ENCODE measurements at regions of chr1 and their contacts with region 1.

Region 1: DNA sequence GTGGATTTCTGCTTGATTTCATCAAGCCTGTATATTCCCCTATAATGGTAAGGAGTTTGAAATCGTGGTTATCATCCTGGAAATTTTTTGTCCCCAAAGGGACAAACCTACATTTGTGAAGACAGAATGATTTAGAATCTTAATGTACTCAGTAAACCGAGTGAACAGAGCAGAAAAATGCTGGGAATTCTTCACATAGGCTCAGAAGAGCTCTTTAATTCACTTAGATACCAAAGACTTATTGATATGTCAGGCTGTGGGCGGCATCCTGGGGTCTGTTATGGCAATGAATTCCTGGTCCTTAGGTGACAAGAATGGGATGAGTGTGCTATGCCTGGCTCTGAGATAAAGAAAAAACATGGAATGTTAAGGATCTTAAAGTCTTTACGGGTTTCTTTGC is 74.9 kb downstream of the ROR1 start:
- DNase-seq: no peak
- H3K4me3 ChIP-seq: no peak overlapping the region
- H3K27ac ChIP-seq: no peak overlapping the region
- H3K4me1 ChIP-seq: no peaks in the 10 kb centered on the region
- H3K27me3 ChIP-seq: no peaks in the 10 kb centered on the region
- CTCF ChIP-seq: no peak
- POLR2A ChIP-seq: no peak

Region 2: DNA sequence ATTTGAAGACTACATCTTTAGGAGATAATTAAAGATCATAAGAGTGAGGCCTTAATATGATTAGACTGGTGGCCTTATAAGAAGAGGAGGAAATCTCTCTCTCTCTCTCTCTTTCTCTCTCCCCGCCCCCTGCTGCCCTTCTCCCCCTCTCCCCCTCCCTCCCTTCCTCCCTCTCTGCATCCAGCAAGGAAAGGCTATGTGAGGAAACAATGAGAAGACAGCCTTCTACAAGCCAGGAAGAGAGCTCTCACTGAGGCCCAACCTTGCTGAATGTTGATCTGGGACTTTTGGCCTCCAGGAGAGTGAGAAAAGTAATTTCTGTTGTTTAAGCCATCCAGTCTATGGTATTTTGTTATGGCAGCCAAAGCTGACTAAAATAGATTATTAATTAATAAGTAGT is 504.8 kb before region 1 on chr1:
- intact Hi-C with region 1: no loop called
- DNase-seq: no peak
- H3K4me3 ChIP-seq: no peak overlapping the region
- H3K27ac ChIP-seq: no peak overlapping the region
- H3K4me1 ChIP-seq: no peaks in the 10 kb centered on the region
- H3K27me3 ChIP-seq: no peaks in the 10 kb centered on the region
- CTCF ChIP-seq: no peak
- POLR2A ChIP-seq: no peak

Region 3: DNA sequence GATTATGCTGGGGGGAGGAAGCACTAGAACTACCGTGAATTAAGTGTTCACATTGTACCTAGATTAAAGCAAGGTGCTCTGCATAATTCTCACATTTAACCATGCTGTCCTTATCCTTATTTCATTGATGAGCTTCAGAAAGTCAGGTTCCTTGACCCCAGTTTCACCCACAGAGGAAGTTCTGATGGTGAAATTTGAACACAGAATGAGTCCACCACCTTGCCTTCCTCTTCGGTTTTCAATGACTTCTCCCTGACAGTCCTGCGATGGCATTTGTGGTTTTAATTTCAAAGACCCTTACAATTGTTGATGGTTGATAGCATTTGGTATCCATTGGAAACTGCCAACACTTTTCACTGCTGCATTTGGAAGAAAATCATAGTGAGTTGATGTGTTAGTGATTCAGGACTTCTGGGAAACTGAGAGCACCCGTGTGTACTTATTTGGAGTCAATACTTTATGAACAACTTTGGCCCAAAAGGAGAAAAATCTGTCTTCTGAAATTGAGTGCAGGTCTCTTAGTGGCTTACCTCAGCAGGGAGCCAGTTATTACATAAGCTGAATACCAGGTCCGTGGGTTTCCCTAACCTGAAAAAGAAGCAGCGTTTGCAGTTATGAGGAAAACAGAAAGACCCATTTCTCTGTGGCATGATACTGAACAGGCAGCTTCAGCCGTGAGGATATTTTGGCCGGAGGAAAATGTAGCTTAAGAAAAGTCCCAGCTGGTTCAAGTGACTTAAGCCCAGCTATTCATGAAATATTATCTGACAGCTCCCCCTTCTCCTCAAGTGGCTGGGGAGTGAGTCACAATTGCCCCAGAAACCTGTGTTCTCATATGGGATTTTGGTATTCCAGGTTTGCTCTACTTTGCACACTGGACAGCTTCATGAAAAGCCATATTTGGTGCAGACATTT is 27.4 kb before region 1 on chr1:
- intact Hi-C with region 1: loop called (anchors 2 kb)
- DNase-seq: no peak
- H3K4me3 ChIP-seq: no peak overlapping the region
- H3K27ac ChIP-seq: no peak overlapping the region
- H3K4me1 ChIP-seq: no peaks in the 10 kb centered on the region
- H3K27me3 ChIP-seq: no peaks in the 10 kb centered on the region
- CTCF ChIP-seq: no peak
- POLR2A ChIP-seq: no peak

Measured in breast epithelium (tissue), 4 donors.